ENCODE measurements at regions of chr6 and their contacts with region 1.

Region 1: DNA sequence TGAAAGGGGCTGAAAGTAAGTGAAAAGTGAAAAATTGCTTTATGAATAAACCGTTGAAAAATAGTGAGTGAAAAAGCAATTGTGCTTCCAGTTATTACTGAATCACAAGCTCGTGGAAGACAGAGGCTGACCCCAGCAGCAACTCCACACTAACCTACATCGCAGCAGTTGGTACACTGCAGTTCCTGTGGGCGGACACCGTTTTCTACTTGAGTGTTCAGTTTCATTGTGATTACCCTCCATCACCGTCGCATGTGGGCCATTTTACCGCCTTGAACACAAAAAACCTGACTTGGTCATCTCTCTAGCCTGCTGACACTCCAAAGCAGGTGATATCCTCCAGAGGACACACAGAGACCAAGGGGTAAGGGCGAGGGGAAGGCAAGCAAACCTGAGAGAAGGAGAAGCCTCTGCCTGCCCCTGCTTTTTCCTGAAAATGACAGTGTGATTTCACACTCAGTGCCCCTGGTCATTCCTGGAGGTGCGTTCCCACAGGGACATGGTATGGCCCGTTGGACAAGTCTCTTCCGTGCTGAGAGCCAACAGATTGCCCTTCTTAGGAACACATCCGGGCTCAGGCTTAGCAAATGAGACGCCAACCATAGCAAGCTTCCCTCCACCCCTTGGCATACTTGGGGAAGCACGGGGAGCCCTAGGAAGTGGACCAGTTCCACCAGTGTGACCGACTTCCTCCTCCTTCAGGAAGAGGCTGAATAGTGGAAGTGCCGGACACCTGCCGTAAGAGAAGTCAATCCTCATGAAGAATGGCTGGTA is 28.5 kb downstream of the PRDM1 start:
- DNase-seq: no peak
- ATAC-seq: peak; percentile 57
- H3K4me3 Mint-ChIP-seq: peak overlapping the region; percentile 25
- H3K27ac Mint-ChIP-seq: peak overlapping the region; percentile 5
- H3K4me1 Mint-ChIP-seq: peaks cover 42% of the 10 kb centered on the region
- H3K27me3 Mint-ChIP-seq: no peaks in the 10 kb centered on the region
- CTCF ChIP-seq: no peak

Region 2: GRCh38 chr6:104572901-104573300 is 1541.8 kb before region 1 on chr6:
- CTCF ChIA-PET with region 1: no interaction called
- POLR2A ChIA-PET with region 1: no interaction called
- intact Hi-C with region 1: no loop called
- DNase-seq: no peak
- ATAC-seq: no peak
- H3K4me3 Mint-ChIP-seq: no peak overlapping the region
- H3K27ac Mint-ChIP-seq: no peak overlapping the region
- H3K4me1 Mint-ChIP-seq: no peaks in the 10 kb centered on the region
- H3K27me3 Mint-ChIP-seq: no peaks in the 10 kb centered on the region
- CTCF ChIP-seq: no peak

Region 3: GRCh38 chr6:106097411-106098231 is 17.1 kb before region 1 on chr6:
- CTCF ChIA-PET with region 1: no interaction called
- POLR2A ChIA-PET with region 1: interaction called, 32 read pairs
- intact Hi-C with region 1: loop called (anchors 1 kb)
- DNase-seq: no peak
- ATAC-seq: peak; percentile 74
- H3K4me3 Mint-ChIP-seq: peak overlapping the region; percentile 89
- H3K27ac Mint-ChIP-seq: peak overlapping the region; percentile 94
- H3K4me1 Mint-ChIP-seq: peaks cover 84% of the 10 kb centered on the region
- H3K27me3 Mint-ChIP-seq: no peaks in the 10 kb centered on the region
- CTCF ChIP-seq: no peak

Region 4: GRCh38 chr6:106103728-106104109 is 11.0 kb before region 1 on chr6:
- CTCF ChIA-PET with region 1: interaction called, 3 read pairs
- POLR2A ChIA-PET with region 1: interaction called, 32 read pairs
- intact Hi-C with region 1: loop called (anchors 1 kb)
- DNase-seq: no peak
- ATAC-seq: peak; percentile 59
- H3K4me3 Mint-ChIP-seq: peak overlapping the region; percentile 69
- H3K27ac Mint-ChIP-seq: peak overlapping the region; percentile 21
- H3K4me1 Mint-ChIP-seq: peaks cover 49% of the 10 kb centered on the region
- H3K27me3 Mint-ChIP-seq: no peaks in the 10 kb centered on the region
- CTCF ChIP-seq: no peak

Measured in activated B cell treated with CpG ODN at 0.5 μM for 24 hours (primary cell).